ENCODE measurements at regions of chr19 and their contacts with region 1.

Region 1: GRCh38 chr19:21202865-21203494 is 61.1 kb downstream of the ZNF431 start:
- DNase-seq: no peak
- H3K4me3 ChIP-seq: no peak overlapping the region
- H3K27ac ChIP-seq: no peak overlapping the region
- H3K4me1 ChIP-seq: no peaks in the 10 kb centered on the region
- H3K27me3 ChIP-seq: no peaks in the 10 kb centered on the region
- CTCF ChIP-seq: peak; percentile 39 to 52

Region 2: GRCh38 chr19:21474671-21475181 is 271.7 kb after region 1 on chr19:
- intact Hi-C with region 1: loop called (anchors 5 kb)
- DNase-seq: peak; percentile 45 to 85
- H3K4me3 ChIP-seq: peak overlapping the region; percentile 45 to 55
- H3K27ac ChIP-seq: no peak overlapping the region
- H3K4me1 ChIP-seq: peaks cover 0 to 15% (median 10%) of the 10 kb centered on the region in 4 donors
- H3K27me3 ChIP-seq: peaks cover 0 to 6% of the 10 kb centered on the region in 2 donors
- CTCF ChIP-seq: no peak

Measured in tibial artery (tissue), 4 donors.